ENCODE measurements at regions of chr17 and their contacts with region 1.

Region 1: DNA sequence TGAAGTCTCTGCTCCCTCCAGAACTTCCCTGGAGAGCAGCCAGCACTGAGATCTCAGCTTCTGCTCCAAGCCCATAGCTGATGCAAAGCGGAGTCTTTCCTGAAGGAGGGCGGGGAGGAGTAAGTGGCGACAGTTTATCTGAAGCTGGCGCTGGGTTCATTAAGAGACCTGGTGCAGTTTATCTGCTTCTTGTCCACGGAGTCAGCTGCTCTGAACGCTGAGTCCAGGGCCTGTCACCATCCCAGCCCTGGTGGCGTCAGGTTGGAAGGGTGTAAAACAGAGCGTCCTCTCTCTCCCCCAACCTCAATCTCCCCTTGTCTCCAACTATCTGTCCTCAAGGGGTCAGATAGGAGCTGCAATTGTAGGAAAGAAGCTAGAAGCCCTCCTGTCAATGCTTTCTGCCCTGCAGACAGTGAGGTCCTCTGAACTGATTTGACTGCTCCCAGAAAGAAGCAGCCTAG is 29.8 kb downstream of the HOXB1 start:
- DNase-seq: no peak
- ATAC-seq: no peak
- H3K4me3 Mint-ChIP-seq: no peak overlapping the region
- H3K27ac Mint-ChIP-seq: no peak overlapping the region
- H3K4me1 Mint-ChIP-seq: peaks cover 9% of the 10 kb centered on the region
- H3K27me3 Mint-ChIP-seq: peaks cover 9% of the 10 kb centered on the region
- CTCF ChIP-seq: no peak

Region 2: DNA sequence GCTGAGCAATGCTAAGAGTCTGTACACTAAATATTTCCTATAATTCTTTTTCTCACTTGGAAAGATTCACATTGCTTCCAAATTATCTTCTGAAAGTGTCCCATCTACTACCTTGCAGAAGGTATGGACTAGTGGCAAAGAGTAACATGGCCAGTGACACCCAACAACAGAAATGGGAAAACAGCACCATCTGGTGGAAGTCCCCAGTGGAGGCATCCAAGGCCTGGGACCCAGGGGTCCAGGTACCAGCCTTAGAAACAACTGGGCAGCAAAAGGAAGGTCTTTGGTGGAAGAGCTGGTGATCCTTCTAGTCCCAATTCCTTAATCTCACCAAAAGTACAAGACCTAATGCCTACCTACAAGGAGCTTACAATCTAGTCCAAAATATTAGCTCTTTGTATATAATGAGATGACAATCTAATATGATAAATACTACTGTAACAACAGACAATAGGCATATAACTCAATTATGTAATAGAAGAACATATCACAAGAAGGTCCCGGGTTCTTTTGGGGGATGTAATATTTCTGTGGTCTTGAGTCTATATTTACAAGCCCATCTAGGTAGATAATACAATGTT is 126.3 kb before region 1 on chr17:
- CTCF ChIA-PET with region 1: no interaction called
- POLR2A ChIA-PET with region 1: no interaction called
- intact Hi-C with region 1: no loop called
- DNase-seq: peak; percentile 50
- ATAC-seq: peak; percentile 71
- H3K4me3 Mint-ChIP-seq: no peak overlapping the region
- H3K27ac Mint-ChIP-seq: no peak overlapping the region
- H3K4me1 Mint-ChIP-seq: peaks cover 26% of the 10 kb centered on the region
- H3K27me3 Mint-ChIP-seq: no peaks in the 10 kb centered on the region
- CTCF ChIP-seq: peak; percentile 58

Region 3: DNA sequence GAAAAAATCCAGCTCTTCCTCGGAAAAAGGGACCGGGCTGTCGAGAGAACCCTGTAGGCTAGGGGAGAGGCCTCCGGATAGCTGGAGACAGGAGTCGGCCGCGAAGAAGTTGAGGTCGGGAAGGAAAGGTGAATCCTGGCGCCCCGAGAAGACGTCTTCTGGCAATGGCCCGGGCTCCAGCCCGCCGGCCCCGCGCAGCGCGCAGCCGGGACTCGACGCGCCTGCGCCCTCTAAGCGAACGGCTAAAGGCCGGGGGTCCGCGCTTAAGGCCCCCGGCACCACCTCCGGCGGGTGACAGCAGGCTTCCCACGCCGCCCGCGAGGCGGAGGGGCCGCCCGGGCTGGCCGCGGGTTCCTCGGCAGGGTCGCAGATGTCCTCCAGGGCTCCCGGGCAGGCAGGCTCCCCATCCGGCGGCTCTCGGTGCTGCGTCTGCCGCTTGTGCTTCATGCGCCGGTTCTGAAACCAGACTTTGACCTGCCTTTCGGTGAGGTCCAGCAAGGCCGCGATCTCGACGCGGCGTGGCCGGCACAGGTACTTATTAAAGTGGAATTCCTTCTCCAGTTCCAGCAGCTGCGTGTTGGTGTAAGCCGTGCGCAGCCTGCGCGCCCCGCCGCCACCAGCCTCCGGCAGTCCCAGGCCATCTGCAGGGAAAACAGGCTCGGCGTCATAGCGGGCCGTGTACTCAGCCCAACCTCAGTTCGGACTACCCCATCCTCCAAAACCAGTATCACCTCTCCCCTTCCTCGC is 42.3 kb after region 1 on chr17:
- CTCF ChIA-PET with region 1: interaction called, 5 read pairs
- POLR2A ChIA-PET with region 1: no interaction called
- intact Hi-C with region 1: loop called (anchors 5 kb)
- DNase-seq: peak; percentile 76
- ATAC-seq: peak; percentile 63
- H3K4me3 Mint-ChIP-seq: peak overlapping the region; percentile 85
- H3K27ac Mint-ChIP-seq: peak overlapping the region; percentile 97
- H3K4me1 Mint-ChIP-seq: peaks cover 33% of the 10 kb centered on the region
- H3K27me3 Mint-ChIP-seq: peaks cover 1% of the 10 kb centered on the region
- CTCF ChIP-seq: peak; percentile 45

Region 4: DNA sequence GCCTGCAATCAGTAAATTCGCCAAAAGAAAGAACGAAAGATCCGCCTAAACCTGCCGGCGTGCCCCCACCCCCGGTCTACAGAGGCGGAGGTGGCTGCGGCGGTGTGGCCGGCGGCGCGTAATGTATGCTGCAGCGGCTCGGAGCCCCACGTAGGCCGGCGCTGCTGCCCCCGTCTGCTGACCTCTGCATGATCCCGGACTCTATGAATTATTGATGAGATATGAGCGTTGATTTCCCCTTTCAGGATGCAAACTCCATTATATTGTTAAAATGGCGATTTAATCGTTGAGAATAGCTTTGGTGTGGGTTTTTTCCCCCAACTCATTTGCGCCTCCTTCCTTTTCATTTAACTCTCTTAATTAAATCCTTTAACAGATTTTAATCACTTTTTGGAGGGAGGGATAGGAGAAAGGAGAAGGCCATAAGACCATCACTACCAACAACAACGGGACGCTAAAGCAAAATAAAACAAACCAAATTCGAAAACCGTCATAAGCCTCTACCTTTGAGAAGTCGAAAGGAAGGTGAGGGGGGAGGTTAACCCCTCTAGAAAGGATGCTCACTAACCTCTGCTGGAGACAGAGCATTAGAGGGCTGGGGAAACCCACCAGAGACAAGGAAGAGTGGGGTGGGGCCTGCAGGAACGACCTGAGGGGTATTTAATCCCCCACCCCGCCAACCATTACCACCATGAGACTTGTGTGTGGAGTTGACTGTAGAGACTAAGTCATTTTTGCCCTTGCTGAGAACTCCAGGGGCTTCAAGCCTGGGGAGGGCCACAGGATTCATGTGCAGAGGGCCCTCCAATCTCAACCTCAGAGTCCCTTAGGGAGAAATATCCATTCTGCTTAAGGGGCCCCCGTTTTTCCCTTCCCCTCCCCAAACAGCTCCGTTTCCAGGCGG is 85.6 kb after region 1 on chr17:
- CTCF ChIA-PET with region 1: interaction called, 10 read pairs
- POLR2A ChIA-PET with region 1: interaction called, 4 read pairs
- intact Hi-C with region 1: no loop called
- DNase-seq: peak; percentile 73
- ATAC-seq: peak; percentile 32
- H3K4me3 Mint-ChIP-seq: peak overlapping the region; percentile 89
- H3K27ac Mint-ChIP-seq: no peak overlapping the region
- H3K4me1 Mint-ChIP-seq: peaks cover 27% of the 10 kb centered on the region
- H3K27me3 Mint-ChIP-seq: peaks cover 89% of the 10 kb centered on the region
- CTCF ChIP-seq: no peak

Region 5: DNA sequence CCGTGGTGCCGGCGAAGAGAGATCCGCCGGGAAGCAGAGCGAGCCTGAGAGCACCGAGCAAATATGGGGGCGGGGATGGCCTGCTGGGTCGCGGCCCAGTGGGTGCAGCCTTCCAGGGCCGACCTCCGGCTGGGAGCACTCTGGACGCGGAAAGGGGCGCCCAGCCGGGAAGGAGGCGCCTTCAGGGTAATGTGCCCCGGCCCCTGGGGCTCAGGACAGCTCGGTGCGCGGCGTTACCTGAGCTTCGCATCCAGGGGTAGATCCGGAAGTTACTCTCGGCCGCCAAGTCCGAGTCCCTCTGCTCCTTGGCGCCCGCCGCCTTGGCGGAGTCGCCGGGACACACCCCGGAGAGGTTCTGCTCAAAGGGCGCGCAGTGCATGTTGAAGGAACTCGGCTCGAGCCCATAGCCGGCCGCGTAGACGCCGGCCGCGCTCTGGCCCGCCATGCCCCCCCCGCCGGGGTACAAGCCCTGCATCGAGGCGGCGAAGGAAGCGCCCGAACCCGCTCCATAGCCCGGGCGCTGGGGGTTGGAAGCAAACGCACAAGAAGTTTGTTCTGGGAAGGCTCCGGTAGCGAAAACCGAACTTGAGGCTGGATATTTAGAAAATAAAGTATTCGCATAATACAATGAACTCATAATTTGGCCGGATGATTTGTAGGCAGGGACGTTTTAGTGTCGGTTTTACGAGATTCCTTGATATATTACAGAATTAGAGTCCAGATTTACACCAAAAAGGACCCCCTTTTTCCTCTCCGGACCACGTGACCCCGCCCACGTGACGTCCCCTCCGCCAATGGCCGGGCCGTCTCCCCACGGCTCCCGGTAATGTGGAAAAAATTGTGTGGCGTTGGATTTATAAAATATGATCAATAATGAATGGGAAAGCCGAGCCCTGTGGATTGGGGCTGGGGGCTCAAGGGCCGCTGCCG is 109.6 kb after region 1 on chr17 and contains the start of gene HOXB7:
- CTCF ChIA-PET with region 1: no interaction called
- POLR2A ChIA-PET with region 1: no interaction called
- intact Hi-C with region 1: no loop called
- DNase-seq: peak; percentile 81
- ATAC-seq: peak; percentile 29
- H3K4me3 Mint-ChIP-seq: peak within 1 kb of the TSS; percentile 88
- H3K27ac Mint-ChIP-seq: peak within 1 kb of the TSS; percentile 63
- H3K4me1 Mint-ChIP-seq: peaks cover 30% of the 10 kb centered on the region
- H3K27me3 Mint-ChIP-seq: peaks cover 73% of the 10 kb centered on the region
- CTCF ChIP-seq: no peak
- total RNA-seq, gene HOXB7: 0.50 to 1.0 TPM

Measured in activated CD8-positive, alpha-beta T cell treated with anti-CD3 and anti-CD28 coated beads for 36 hours (primary cell).